ENCODE measurements at regions of chr17 and their contacts with region 1.

Region 1: DNA sequence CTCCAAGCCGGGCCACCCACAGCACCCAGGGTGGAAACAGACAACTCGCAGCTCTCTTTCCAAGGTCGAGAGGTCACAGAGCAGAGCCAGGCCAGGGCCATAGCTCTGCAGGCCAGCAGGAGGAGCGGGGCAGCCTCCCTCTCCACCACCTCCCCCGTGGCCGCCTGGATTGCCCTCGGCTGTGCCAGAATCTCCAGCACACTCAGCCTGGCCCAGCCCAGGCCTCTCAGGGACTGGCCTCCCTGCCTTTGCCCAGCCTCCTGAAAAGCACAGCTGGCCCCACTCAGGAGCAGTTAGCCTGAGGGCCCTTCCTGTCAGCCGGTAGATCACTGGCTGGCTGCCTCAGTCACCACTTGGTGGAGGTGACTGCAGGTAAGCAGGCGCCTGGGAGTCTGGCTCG is 85.8 kb upstream of the SEC14L1 start:
- DNase-seq: no peak
- H3K27ac ChIP-seq: no peak overlapping the region
- CTCF ChIP-seq: no peak

Region 2: DNA sequence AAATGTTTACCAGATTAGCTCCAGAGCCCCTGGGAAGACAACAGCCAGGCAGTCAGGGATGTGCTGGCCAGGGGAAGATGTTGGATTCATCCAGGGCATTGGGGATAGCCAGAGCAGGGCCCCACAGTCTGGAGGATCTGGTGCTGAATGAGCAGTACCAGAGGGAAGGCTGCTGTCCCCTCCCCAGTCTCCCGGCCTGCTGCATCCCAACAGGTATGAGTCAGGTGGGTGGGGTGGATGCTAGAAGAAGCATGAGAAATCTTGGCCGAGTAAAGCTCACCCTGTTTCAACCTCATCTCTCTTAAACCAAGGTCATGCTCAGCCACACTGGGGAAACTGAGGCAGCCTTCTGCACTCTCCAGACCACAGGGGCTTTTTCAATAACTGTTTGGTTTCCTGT is 14.0 kb after region 1 on chr17:
- CTCF ChIA-PET with region 1: interaction called, 11 read pairs
- POLR2A ChIA-PET with region 1: interaction called, 3 read pairs
- DNase-seq: peak; percentile 80
- H3K27ac ChIP-seq: no peak overlapping the region
- CTCF ChIP-seq: no peak

Region 3: GRCh38 chr17:77189148-77189547 is 134.2 kb after region 1 on chr17:
- CTCF ChIA-PET with region 1: no interaction called
- POLR2A ChIA-PET with region 1: no interaction called
- DNase-seq: no peak
- H3K27ac ChIP-seq: no peak overlapping the region
- CTCF ChIP-seq: no peak